CD8-positive, alpha-beta T cell (primary cell): ENCODE measurements at regions of chr5 and their contacts with region 1.

Region 1: GRCh38 chr5:76351577-76351976 is 51.5 kb upstream of the IQGAP2 start:
- DNase-seq: no peak
- ATAC-seq: no peak
- H3K4me3 ChIP-seq: no peak overlapping the region
- H3K4me3 Mint-ChIP-seq: no peak overlapping the region
- H3K27ac ChIP-seq: no peak overlapping the region
- H3K27ac Mint-ChIP-seq: no peak overlapping the region
- H3K4me1 ChIP-seq: no peaks in the 10 kb centered on the region
- H3K4me1 Mint-ChIP-seq: no peaks in the 10 kb centered on the region
- H3K27me3 ChIP-seq: no peaks in the 10 kb centered on the region
- H3K27me3 Mint-ChIP-seq: no peaks in the 10 kb centered on the region
- CTCF ChIP-seq: no peak

Region 2: DNA sequence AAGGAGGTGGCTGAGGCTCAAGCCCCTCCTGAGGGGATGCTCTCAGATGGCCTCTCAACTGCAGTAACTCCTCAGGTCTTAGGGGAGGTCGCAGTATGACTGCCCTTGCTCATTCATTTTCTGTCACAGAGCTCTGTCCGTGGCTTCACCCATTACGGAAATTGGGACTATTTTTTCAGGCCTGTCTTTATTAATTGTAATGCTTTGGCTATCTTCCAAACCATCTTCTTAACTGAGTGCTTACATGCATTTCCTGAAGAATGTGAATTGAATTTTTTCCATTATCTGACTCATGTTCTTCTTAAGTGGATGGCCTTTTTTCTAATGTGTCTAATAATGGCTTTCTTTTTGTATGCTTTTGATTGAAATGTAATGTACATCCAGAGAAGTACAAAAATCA is 304.8 kb before region 1 on chr5:
- CTCF ChIA-PET with region 1: no interaction called
- POLR2A ChIA-PET with region 1: no interaction called
- intact Hi-C with region 1: no loop called
- DNase-seq: no peak
- ATAC-seq: no peak
- H3K4me3 ChIP-seq: no peak overlapping the region
- H3K4me3 Mint-ChIP-seq: no peak overlapping the region
- H3K27ac ChIP-seq: no peak overlapping the region
- H3K27ac Mint-ChIP-seq: no peak overlapping the region
- H3K4me1 ChIP-seq: no peaks in the 10 kb centered on the region
- H3K4me1 Mint-ChIP-seq: no peaks in the 10 kb centered on the region
- H3K27me3 ChIP-seq: peaks cover 0 to 4% of the 10 kb centered on the region in 2 experiments
- H3K27me3 Mint-ChIP-seq: peaks cover 14% of the 10 kb centered on the region
- CTCF ChIP-seq: no peak

Region 3: GRCh38 chr5:76365561-76365960 is 14.0 kb after region 1 on chr5:
- CTCF ChIA-PET with region 1: no interaction called
- POLR2A ChIA-PET with region 1: no interaction called
- intact Hi-C with region 1: loop called in 1 of 2 experiments (anchors 1 kb)
- DNase-seq: no peak
- ATAC-seq: no peak
- H3K4me3 ChIP-seq: no peak overlapping the region
- H3K4me3 Mint-ChIP-seq: no peak overlapping the region
- H3K27ac ChIP-seq: no peak overlapping the region
- H3K27ac Mint-ChIP-seq: no peak overlapping the region
- H3K4me1 ChIP-seq: no peaks in the 10 kb centered on the region
- H3K4me1 Mint-ChIP-seq: peaks cover 7% of the 10 kb centered on the region
- H3K27me3 ChIP-seq: no peaks in the 10 kb centered on the region
- H3K27me3 Mint-ChIP-seq: no peaks in the 10 kb centered on the region
- CTCF ChIP-seq: no peak